Breast epithelium (tissue), 4 donors: ENCODE measurements at regions of chr5 and their contacts with region 1.

Region 1: DNA sequence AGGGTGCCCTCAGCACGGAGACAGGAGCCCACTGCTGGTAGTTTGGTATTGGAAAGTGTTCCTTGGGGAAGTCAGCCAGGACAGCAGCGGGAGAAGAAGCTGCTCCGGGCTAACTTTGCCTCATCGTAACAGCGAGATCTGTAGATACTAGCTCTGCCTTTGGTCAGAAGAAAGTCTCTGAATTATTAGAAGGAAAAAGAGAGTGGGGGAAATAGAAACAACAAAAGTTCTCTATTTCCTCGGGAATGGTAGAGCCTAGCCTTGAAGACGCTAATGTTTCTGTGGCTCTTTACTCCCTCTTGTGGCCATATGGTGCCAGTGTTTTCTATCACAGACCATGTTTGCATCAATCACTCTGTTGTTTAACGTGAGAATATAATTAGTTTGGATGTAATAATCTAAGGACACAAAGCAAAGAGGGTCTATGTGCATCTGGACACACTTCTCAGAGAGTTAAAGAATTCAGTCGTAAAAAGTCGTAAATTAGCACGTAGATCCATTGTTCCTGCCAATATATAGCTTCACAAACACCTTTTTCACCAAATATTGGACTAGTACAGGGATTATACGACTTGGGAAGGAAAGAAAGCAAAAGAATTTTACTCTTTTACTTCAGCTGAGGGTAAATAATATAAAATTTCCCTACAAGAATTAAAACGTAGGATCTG is 40.2 kb upstream of the HSD17B4 start:
- DNase-seq: peak in 1 of 2 donors; percentile 45
- H3K4me3 ChIP-seq: peak overlapping the region; percentile 40 to 64 (median 46)
- H3K27ac ChIP-seq: peak overlapping the region; percentile 70 to 79
- H3K4me1 ChIP-seq: peaks cover 0 to 4% of the 10 kb centered on the region in 2 donors
- H3K27me3 ChIP-seq: no peaks in the 10 kb centered on the region
- CTCF ChIP-seq: peak; percentile 93 to 96 (median 93)
- POLR2A ChIP-seq: no peak

Region 2: DNA sequence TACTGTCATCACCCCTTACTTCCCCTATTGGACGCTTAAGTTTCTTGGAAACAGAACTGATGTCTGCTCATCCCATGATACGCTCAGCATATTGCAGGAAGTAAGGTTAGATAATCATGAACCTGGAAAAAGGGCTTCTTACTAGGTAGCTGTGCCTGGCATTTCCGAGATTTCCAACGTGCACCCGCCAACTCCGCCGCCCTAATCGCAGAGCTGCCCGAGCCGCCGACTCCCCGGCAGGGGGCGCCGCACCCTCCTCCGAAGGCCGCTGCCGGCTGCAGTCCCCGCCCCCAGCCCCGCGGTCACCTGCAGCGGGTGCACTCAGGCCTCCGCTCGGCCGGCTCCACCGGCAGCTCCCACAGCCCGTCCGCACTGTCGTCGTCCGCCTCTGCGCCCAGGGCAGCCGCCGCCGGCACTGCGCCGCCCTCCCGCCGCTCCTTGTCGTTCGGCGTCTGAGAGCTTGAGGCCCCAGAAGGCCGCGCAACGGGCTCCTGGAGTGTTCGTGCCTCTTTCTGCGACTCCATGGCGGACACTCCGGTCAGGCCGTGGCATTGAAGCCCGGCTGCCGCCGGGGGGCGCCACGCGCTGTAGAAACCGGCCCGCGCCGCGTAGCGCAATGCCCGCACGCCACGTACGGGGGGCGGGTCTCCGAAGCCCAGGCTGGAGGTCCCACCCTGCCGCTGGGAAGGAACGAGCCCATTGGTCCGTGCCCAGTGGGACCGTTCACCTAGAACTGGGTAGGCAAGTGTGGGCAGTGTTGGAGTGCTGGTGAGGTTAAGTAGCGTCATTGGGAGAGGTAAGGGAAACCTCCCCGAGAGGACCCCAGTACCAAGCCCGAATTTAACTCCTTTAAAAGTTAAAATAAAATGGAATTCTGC is 423.8 kb before region 1 on chr5 and contains the start of gene DTWD2:
- intact Hi-C with region 1: loop called (anchors 10 kb)
- DNase-seq: peak; percentile 85 to 91
- H3K4me3 ChIP-seq: peak within 1 kb of the TSS; percentile 71 to 89 (median 73)
- H3K27ac ChIP-seq: peak within 1 kb of the TSS; percentile 88 to 91
- H3K4me1 ChIP-seq: no peaks in the 10 kb centered on the region
- H3K27me3 ChIP-seq: no peaks in the 10 kb centered on the region
- CTCF ChIP-seq: peak; percentile 54 to 92 (median 84)
- POLR2A ChIP-seq: no peak
- total RNA-seq, gene DTWD2: 6.4 to 23.1 (median 14.1) TPM

Region 3: DNA sequence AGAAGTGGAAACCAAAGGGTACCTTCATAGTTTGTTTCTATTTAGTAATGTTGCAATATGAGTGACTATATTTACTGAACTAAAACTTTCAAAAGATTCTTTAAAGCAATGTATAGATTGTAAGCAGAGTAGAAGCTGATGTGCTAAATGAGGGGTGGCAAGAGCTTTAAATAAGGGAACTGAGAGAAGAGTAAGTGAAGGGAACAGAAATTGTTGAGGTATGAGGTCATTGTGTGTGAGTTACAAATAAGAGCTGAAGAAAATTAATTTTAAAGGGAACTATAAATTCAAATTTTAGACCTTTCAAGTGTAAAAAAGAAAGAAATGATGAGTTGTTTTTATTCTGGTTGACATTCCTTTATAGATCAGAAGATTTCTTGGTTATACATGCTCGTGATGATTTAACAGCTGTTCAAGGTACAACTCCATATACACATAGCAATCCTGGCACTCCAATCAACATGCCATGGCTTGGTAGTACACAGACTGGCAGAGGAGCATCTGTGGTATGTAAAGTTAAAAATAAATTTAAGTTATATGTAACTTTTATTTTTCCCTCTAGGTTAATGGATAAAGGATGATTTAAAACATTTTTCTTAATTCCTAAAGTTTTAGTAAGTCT is 191.4 kb before region 1 on chr5:
- intact Hi-C with region 1: loop called (anchors 2 kb)
- DNase-seq: no peak
- H3K4me3 ChIP-seq: no peak overlapping the region
- H3K27ac ChIP-seq: no peak overlapping the region
- H3K4me1 ChIP-seq: no peaks in the 10 kb centered on the region
- H3K27me3 ChIP-seq: no peaks in the 10 kb centered on the region
- CTCF ChIP-seq: no peak
- POLR2A ChIP-seq: no peak

Region 4: DNA sequence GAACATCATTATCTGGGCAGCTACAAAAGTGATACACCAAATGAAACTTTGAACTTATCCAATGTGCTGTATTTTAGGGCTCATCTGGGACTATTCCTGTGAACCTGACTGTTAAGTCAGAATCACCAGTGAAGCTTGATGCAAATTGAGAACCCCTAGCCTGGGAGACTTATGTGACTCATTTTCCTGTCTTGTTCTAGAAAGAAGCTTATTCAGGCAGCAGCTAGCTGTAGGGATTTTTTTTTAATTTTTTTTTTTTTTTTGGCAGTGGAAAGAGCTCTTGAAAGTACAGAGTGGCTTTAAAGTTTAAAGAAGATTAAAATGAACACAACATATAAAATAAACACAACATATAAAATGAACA is 137.3 kb before region 1 on chr5:
- intact Hi-C with region 1: loop called (anchors 10 kb)
- DNase-seq: no peak
- H3K4me3 ChIP-seq: no peak overlapping the region
- H3K27ac ChIP-seq: peak overlapping the region; percentile 56 to 66
- H3K4me1 ChIP-seq: no peaks in the 10 kb centered on the region
- H3K27me3 ChIP-seq: no peaks in the 10 kb centered on the region
- CTCF ChIP-seq: no peak
- POLR2A ChIP-seq: no peak

Region 5: DNA sequence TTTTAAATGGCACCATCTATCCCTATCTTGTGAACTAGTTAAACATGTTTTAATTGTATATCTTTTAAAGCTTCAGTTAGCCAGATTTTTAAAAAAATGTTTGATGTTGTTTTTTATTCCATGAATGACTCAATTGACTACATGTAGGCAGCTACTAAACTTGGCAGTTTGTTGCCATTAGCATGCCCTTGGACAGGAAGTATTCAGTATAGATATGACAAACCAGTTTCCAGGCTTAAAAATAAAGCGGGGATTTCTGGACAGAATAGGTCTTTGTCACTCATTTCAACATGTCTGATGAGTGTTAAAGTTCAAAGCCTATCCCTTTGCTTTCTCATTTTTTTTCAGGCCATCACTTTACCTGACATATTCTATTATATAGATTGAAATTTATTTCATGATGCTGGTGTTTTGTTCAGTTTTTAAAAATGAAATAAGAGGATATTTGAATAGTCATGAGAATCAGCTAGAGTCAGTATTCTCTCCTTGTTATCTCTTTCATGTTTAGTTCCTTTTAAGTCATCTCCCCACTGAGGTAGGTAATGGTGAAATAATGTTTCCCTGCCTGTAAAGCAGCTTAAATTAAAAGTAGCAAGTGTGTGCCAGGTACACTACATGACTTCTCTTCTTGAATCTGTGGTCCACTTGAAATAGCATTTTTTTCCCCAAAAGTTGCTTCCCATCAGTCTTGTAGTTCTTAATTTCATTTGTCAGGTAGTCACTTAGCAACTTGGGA is 44.4 kb before region 1 on chr5:
- intact Hi-C with region 1: no loop called
- DNase-seq: no peak
- H3K4me3 ChIP-seq: no peak overlapping the region
- H3K27ac ChIP-seq: no peak overlapping the region
- H3K4me1 ChIP-seq: peaks cover 3 to 5% of the 10 kb centered on the region in 2 donors
- H3K27me3 ChIP-seq: no peaks in the 10 kb centered on the region
- CTCF ChIP-seq: no peak
- POLR2A ChIP-seq: no peak

Region 6: DNA sequence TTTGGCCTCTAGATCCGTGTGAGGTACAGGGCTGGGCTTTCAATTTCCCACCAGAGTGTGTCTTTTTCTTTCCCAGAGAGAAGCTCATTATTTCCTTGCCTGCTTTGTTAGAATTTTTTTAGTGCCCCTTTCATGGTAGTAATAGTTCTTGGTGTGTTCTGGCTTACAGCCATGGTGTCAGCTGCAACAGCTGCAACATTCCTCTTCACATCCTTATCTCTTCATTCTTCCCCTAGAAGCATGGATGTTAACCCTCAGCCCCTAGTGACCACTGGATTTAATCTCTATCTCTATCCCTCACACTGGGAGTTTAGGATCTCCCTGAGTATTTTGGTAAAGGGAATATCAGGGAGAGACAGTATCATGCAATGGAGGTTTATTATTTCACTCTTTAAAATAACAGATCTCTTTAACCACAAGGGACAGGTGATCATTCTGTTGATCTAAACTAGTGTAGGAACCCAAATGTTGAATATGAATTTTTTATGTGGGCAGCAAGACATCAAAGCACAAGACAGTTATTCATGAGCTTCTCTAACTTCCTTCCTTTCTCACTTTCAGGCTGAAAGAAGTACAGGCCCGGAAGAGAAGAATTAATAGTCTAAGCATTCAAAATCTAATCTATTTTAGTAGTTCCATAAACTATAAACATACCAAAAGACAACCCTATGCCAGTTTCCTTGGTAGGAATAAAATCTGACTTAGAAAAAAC is 377.5 kb after region 1 on chr5:
- intact Hi-C with region 1: no loop called
- DNase-seq: no peak
- H3K4me3 ChIP-seq: no peak overlapping the region
- H3K27ac ChIP-seq: no peak overlapping the region
- H3K4me1 ChIP-seq: no peaks in the 10 kb centered on the region
- H3K27me3 ChIP-seq: no peaks in the 10 kb centered on the region
- CTCF ChIP-seq: no peak
- POLR2A ChIP-seq: no peak

Region 7: GRCh38 chr5:120852222-120852860 is 1440.3 kb after region 1 on chr5:
- intact Hi-C with region 1: no loop called
- DNase-seq: no peak
- H3K4me3 ChIP-seq: no peak overlapping the region
- H3K27ac ChIP-seq: no peak overlapping the region
- H3K4me1 ChIP-seq: no peaks in the 10 kb centered on the region
- H3K27me3 ChIP-seq: no peaks in the 10 kb centered on the region
- CTCF ChIP-seq: no peak
- POLR2A ChIP-seq: no peak